ENCODE measurements at regions of chr1 and their contacts with region 1.

Region 1: GRCh38 chr1:6393400-6394187 is at the start of gene ACOT7:
- DNase-seq: peak; percentile 92

Region 2: GRCh38 chr1:6127587-6128163 is 265.9 kb before region 1 on chr1:
- CTCF ChIA-PET with region 1: no interaction called
- POLR2A ChIA-PET with region 1: no interaction called
- DNase-seq: peak; percentile 99

Region 3: GRCh38 chr1:6360517-6361070 is 33.0 kb before region 1 on chr1:
- CTCF ChIA-PET with region 1: interaction called, 8 read pairs
- POLR2A ChIA-PET with region 1: interaction called, 20 read pairs
- DNase-seq: no peak

Region 4: DNA sequence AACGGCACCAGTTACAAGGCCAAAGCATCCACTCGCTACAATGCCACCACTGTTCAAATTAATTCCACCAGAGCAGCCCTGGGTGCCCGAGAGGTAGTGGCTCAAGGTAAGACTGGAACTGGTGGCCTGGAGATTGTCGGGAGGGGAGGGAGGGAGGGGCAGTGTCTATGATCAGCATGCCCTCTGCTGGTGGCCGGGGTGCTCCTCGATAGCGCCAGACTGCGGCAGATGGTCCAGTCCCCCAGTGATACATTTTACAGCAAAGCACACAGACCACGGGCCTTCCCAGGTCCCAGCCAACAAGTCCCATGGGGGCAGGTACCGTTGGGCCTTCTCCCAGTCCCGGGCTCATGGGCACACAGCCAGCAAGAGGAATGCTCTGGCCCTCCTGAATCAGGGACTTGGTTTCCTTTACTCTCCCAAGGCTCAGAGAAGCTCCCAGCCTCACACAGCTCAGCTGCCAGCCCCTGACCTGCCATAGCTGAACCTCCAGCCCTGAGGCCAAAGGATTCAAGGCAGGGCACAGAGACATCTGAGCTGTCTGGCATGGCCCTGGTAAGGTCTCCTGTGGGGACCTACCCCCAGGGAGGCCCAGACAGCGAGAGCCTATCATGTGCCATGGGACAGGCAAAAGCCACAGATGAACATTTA is 15.4 kb before region 1 on chr1:
- CTCF ChIA-PET with region 1: interaction called, 5 read pairs
- POLR2A ChIA-PET with region 1: interaction called, 10 read pairs
- DNase-seq: peak; percentile 65

Region 5: DNA sequence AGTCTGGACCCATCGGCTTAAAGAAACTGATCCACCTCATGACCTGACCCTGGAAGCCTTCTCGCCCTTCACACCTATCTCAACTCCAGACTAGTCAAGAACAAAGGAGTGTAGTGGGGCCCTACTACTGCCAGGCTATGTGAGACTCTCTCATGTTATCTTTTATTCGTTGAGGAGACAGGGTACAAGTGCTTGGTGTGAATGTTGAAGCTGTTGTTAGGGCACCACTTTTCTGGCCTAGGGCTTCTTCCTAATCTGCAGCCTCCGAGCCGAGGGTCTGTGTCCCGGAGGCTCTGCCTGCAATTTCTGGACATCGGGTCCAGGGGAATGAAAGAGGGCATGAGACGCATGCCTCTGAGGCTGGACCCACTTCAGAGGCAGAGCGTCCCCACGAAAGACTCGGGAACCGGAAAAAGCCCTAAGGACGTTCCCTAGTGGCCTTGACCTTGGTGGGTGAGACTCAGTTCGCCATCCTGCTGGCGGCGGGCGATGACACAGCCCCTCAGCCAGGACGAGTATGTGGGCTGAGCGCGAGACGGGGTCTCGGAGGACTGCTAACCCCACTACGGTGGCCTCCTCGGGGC is 307.4 kb after region 1 on chr1:
- CTCF ChIA-PET with region 1: no interaction called
- POLR2A ChIA-PET with region 1: no interaction called
- DNase-seq: no peak

Measured in HEK293T (cell line).